ENCODE measurements at regions of chrX and their contacts with region 1.

Region 1: GRCh38 chrX:71128915-71129765 is 10.7 kb downstream of the MED12 start:
- DNase-seq: peak; percentile 82
- H3K4me3 Mint-ChIP-seq: no peak overlapping the region
- H3K27ac Mint-ChIP-seq: peak overlapping the region; percentile 80
- H3K4me1 Mint-ChIP-seq: peaks cover 10% of the 10 kb centered on the region
- H3K27me3 Mint-ChIP-seq: no peaks in the 10 kb centered on the region

Region 2: GRCh38 chrX:70970482-70970995 is 158.6 kb before region 1 on chrX:
- CTCF ChIA-PET with region 1: interaction called, 4 read pairs
- intact Hi-C with region 1: loop called (anchors 1 kb)
- DNase-seq: no peak
- H3K4me3 Mint-ChIP-seq: no peak overlapping the region
- H3K27ac Mint-ChIP-seq: no peak overlapping the region
- H3K4me1 Mint-ChIP-seq: peaks cover 4% of the 10 kb centered on the region
- H3K27me3 Mint-ChIP-seq: no peaks in the 10 kb centered on the region

Region 3: DNA sequence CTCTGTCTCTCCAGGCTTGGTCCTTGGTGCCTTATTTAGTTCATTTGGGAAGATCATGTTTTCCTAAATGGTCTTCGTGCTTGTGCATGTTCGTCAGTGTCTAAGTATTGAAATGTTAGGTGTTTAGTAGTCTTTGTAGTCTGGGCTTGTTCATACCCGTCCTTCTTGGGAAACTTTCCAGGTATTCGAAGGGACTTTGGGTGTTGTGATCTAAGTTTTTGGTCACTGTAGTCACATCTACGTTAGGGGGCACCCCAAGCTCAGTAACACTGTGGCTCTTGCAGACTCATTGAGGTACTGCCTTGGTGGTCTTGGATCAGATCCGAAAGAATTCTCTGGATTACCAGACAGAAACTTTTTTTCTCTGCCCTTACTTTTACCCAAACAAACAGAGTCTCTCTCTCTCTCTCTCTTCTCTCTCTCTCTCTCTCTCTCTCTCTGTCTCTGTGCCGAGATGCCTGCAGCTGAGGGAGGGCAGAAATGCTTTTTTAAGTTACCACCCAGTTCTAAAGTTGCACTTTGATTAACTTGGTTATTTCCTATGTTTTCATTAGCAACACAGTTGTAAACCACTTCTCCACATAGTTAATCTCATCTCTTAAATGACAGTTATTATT is 130.6 kb before region 1 on chrX:
- CTCF ChIA-PET with region 1: no interaction called
- intact Hi-C with region 1: loop called (anchors 2 kb)
- DNase-seq: peak; percentile 45
- H3K4me3 Mint-ChIP-seq: no peak overlapping the region
- H3K27ac Mint-ChIP-seq: no peak overlapping the region
- H3K4me1 Mint-ChIP-seq: peaks cover 15% of the 10 kb centered on the region
- H3K27me3 Mint-ChIP-seq: no peaks in the 10 kb centered on the region

Region 4: DNA sequence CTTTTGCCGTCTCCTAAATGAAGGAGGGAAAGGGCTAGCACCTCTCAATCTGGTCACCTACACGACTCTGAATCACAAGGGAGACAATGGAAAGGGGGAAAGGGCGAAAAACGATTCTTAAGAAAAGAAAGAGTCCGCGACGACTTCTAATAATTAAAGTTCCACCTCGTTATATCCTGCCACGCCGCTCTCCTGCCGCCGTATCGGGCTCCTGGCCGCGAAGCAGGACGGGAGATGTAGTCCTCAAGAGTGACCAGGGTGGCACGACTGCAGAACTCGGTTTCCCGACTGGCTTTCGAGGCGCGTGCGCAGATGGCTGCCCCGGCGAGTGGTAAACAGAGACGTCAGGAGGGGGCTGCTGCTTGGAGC is 33.6 kb before region 1 on chrX and contains the start of gene FOXO4:
- CTCF ChIA-PET with region 1: interaction called, 60 read pairs
- intact Hi-C with region 1: loop called (anchors 1 kb)
- DNase-seq: peak; percentile 91
- H3K4me3 Mint-ChIP-seq: peak within 1 kb of the TSS; percentile 82
- H3K27ac Mint-ChIP-seq: peak within 1 kb of the TSS; percentile 72
- H3K4me1 Mint-ChIP-seq: peaks cover 30% of the 10 kb centered on the region
- H3K27me3 Mint-ChIP-seq: no peaks in the 10 kb centered on the region
- total RNA-seq, gene FOXO4: 7.9 to 8.9 TPM

Region 5: GRCh38 chrX:71103110-71103983 is 25.8 kb before region 1 on chrX:
- CTCF ChIA-PET with region 1: interaction called, 60 read pairs
- intact Hi-C with region 1: loop called (anchors 1 kb)
- DNase-seq: peak; percentile 78
- H3K4me3 Mint-ChIP-seq: peak overlapping the region; percentile 53
- H3K27ac Mint-ChIP-seq: peak overlapping the region; percentile 95
- H3K4me1 Mint-ChIP-seq: peaks cover 80% of the 10 kb centered on the region
- H3K27me3 Mint-ChIP-seq: no peaks in the 10 kb centered on the region

Region 6: DNA sequence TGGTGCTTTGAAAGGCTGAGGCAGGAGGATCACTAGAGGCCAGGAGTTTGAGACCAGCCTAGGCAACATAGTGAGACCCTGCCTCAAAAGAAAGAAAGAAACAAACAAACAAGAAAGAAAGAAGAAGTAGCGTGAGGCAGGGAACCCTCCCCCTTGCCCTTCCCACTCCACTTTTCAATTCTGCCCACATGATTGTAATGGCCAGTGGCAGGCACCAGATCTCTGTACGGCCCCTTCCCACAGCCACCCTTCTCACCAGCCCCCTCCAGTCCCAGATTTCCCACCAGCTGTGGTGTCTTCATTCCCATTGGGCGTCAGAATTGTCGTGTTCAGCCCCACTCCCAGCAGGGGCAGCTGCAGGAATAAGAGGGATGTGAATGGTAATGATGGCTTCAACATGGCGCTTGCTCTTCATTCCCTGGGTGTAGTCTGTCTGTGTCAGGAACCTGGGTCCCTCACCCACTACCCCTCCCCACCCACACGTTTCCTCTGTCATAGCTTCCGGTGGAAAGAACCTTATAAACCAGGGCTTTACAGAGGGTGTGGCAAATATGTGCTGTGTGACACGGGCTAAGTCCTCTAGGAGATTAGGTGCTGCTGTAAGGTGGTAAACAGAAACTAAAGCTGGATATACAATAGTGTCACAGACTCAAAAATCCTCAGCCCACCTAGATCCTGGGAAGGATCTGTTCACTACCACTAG is 17.8 kb before region 1 on chrX and contains the start of gene IL2RG:
- CTCF ChIA-PET with region 1: interaction called, 14 read pairs
- intact Hi-C with region 1: no loop called
- DNase-seq: peak; percentile 87
- H3K4me3 Mint-ChIP-seq: peak within 1 kb of the TSS; percentile 93
- H3K27ac Mint-ChIP-seq: peak within 1 kb of the TSS; percentile 95
- H3K4me1 Mint-ChIP-seq: peaks cover 37% of the 10 kb centered on the region
- H3K27me3 Mint-ChIP-seq: no peaks in the 10 kb centered on the region
- total RNA-seq, gene IL2RG: 144 to 148 TPM

Region 7: GRCh38 chrX:71118032-71118984 is 10.8 kb before region 1 on chrX and contains the start of gene MED12:
- CTCF ChIA-PET with region 1: interaction called, 14 read pairs
- intact Hi-C with region 1: loop called (anchors 1 kb)
- DNase-seq: peak; percentile 90
- H3K4me3 Mint-ChIP-seq: peak within 1 kb of the TSS; percentile 78
- H3K27ac Mint-ChIP-seq: peak within 1 kb of the TSS; percentile 90
- H3K4me1 Mint-ChIP-seq: peaks cover 21% of the 10 kb centered on the region
- H3K27me3 Mint-ChIP-seq: no peaks in the 10 kb centered on the region
- total RNA-seq, gene MED12: 43.5 to 43.6 TPM

Region 8: GRCh38 chrX:71162981-71163380 is 33.8 kb after region 1 on chrX:
- CTCF ChIA-PET with region 1: no interaction called
- intact Hi-C with region 1: no loop called
- DNase-seq: no peak
- H3K4me3 Mint-ChIP-seq: no peak overlapping the region
- H3K27ac Mint-ChIP-seq: no peak overlapping the region
- H3K4me1 Mint-ChIP-seq: peaks cover 7% of the 10 kb centered on the region
- H3K27me3 Mint-ChIP-seq: no peaks in the 10 kb centered on the region